Endothelial cell of umbilical vein (primary cell): ENCODE measurements at regions of chr18 and their contacts with region 1.

Region 1: GRCh38 chr18:23416298-23416697 is 36.8 kb upstream of the RIOK3 start:
- DNase-seq: no peak
- H3K4me3 ChIP-seq: no peak overlapping the region
- H3K27ac ChIP-seq: no peak overlapping the region
- H3K4me1 ChIP-seq: no peaks in the 10 kb centered on the region
- H3K27me3 ChIP-seq: no peaks in the 10 kb centered on the region
- CTCF ChIP-seq: no peak
- POLR2A ChIP-seq: no peak

Region 2: DNA sequence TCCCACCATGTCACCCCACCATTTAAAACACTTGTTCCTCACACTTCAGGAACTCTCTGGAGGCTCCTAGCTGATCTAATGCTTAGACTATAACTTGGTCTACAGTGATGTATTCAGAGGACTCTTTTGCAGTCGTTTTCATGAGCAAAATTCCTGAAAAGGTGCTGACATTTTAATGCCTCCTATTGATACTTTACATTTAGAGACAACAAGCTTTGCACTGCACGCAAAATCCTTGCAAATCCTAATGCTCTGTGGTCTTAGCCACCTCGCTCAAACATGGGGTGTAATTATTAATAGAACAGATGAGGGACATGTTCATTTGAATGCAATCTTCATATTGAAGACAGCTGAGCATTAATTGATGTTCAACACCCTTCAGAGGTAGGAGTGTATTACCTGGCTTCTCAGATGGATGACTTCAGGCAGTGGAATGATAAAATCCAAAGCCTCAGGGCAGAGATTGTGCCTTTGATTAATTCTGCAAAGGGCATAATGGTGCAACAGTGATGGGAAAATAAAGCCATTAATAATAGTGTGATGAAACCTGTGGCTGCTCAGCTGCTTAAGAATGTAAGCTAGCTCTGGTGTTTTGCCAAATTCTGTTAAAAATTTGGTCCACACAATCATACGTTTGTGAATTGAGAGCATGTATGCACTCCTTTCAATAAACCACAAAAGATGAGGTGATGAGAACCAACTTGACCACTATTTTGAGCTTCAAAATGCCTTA is 1004.0 kb before region 1 on chr18:
- CTCF ChIA-PET with region 1: no interaction called
- POLR2A ChIA-PET with region 1: no interaction called
- dilution Hi-C with region 1: no loop called
- intact Hi-C with region 1: no loop called
- DNase-seq: no peak
- H3K4me3 ChIP-seq: no peak overlapping the region
- H3K27ac ChIP-seq: no peak overlapping the region
- H3K4me1 ChIP-seq: no peaks in the 10 kb centered on the region
- H3K27me3 ChIP-seq: no peaks in the 10 kb centered on the region
- CTCF ChIP-seq: no peak
- POLR2A ChIP-seq: no peak

Region 3: DNA sequence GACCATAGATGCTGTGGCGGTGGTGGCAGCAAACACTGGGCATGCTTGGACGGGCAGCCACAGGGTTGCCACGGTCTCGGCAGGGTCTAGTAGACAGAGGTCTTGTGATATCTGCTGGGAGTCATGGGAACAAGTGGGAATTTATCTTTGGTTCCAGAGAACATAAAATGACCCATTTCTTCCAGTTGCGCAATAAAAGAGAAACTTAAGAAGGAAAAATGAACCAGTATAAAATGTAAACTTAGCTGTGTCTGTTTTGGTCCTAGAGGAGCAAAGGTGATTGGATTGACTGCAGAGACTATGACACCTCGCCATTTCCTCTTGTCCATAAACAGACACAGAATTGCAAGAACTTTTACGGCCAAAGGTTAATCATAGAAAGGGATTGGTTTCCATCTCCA is 615.7 kb before region 1 on chr18:
- CTCF ChIA-PET with region 1: interaction called, 11 read pairs
- POLR2A ChIA-PET with region 1: no interaction called
- dilution Hi-C with region 1: no loop called
- intact Hi-C with region 1: no loop called
- DNase-seq: no peak
- H3K4me3 ChIP-seq: no peak overlapping the region
- H3K27ac ChIP-seq: no peak overlapping the region
- H3K4me1 ChIP-seq: no peaks in the 10 kb centered on the region
- H3K27me3 ChIP-seq: peaks cover 33 to 48% of the 10 kb centered on the region in 2 experiments
- CTCF ChIP-seq: no peak
- POLR2A ChIP-seq: no peak

Region 4: GRCh38 chr18:23032030-23032582 is 384.2 kb before region 1 on chr18:
- CTCF ChIA-PET with region 1: interaction called, 85 read pairs
- POLR2A ChIA-PET with region 1: interaction called, 3 read pairs
- dilution Hi-C with region 1: no loop called
- intact Hi-C with region 1: loop called (anchors 1 kb)
- DNase-seq: peak; percentile 45
- H3K4me3 ChIP-seq: no peak overlapping the region
- H3K27ac ChIP-seq: peak overlapping the region; percentile 20
- H3K4me1 ChIP-seq: peaks cover 10% of the 10 kb centered on the region
- H3K27me3 ChIP-seq: no peaks in the 10 kb centered on the region
- CTCF ChIP-seq: no peak
- POLR2A ChIP-seq: no peak

Region 5: DNA sequence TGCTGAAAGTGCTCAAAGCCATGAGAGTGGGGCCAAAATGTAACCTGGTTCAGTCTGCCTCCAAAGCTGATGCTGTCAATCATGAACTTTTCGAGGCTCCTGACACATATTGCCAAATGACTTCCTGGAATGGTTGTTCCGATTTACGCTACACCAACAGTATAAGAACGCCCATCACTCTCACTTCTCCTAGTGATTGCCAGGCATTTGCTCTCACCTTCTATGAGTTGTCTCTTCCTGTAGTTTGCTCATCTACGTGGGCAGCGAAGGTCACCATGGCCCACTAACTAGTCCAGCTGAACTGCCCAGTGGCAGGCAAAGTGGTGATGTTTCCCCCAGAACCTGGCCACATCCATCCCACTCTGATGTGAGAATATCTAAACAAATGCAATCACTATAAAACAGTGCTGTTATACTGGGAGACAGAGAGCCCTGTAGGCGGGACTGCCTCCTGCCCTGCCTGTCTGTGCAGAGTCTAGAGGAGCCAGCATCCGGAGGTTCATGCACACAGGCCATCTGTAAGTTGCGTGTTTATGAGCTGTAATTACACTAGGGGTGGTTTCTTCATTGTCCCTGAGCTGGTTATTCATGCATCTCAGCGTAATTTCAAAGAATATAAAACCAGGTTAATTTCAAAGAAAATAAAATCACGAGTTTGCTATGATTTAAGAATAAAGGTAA is 289.8 kb before region 1 on chr18:
- CTCF ChIA-PET with region 1: interaction called, 92 read pairs
- POLR2A ChIA-PET with region 1: no interaction called
- dilution Hi-C with region 1: no loop called
- intact Hi-C with region 1: loop called (anchors 1 kb)
- DNase-seq: no peak
- H3K4me3 ChIP-seq: no peak overlapping the region
- H3K27ac ChIP-seq: no peak overlapping the region
- H3K4me1 ChIP-seq: peaks cover 17% of the 10 kb centered on the region
- H3K27me3 ChIP-seq: no peaks in the 10 kb centered on the region
- CTCF ChIP-seq: no peak
- POLR2A ChIP-seq: no peak

Region 6: DNA sequence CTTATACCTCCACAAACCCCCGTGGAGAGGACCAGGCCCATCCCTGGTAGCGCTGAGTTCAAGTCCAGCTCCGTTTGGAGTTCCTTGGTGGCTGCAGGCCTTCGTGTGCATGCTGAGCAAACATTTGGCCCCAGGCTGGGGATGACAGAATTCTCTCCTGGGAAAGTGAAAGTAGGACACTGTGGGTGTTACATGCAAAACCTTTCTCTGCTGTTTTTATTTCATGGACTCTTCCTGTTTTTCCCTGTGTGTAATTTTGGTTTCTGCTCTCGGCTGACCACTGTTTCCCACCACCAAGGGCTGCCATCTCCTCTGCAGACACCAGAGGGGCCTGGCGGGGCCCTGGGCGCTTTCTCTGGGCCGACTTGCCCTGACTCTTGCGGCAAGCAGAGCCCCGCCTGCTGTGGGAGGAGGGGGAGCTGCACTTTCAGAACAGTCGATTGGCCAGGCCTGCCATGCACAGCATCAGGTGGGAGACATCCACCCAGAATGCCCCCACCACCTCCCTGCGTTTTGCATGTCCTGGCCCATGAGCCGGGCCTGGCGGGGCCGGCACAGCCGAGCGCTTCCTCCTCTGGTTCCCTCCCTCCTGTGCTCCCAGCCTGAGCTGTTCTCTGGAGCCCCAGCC is 178.7 kb before region 1 on chr18:
- CTCF ChIA-PET with region 1: interaction called, 28 read pairs
- POLR2A ChIA-PET with region 1: no interaction called
- dilution Hi-C with region 1: no loop called
- intact Hi-C with region 1: loop called (anchors 1 kb)
- DNase-seq: peak; percentile 84
- H3K4me3 ChIP-seq: no peak overlapping the region
- H3K27ac ChIP-seq: peak overlapping the region; percentile 83
- H3K4me1 ChIP-seq: peaks cover 21% of the 10 kb centered on the region
- H3K27me3 ChIP-seq: no peaks in the 10 kb centered on the region
- CTCF ChIP-seq: peak; percentile 51 to 66
- POLR2A ChIP-seq: no peak

Region 7: DNA sequence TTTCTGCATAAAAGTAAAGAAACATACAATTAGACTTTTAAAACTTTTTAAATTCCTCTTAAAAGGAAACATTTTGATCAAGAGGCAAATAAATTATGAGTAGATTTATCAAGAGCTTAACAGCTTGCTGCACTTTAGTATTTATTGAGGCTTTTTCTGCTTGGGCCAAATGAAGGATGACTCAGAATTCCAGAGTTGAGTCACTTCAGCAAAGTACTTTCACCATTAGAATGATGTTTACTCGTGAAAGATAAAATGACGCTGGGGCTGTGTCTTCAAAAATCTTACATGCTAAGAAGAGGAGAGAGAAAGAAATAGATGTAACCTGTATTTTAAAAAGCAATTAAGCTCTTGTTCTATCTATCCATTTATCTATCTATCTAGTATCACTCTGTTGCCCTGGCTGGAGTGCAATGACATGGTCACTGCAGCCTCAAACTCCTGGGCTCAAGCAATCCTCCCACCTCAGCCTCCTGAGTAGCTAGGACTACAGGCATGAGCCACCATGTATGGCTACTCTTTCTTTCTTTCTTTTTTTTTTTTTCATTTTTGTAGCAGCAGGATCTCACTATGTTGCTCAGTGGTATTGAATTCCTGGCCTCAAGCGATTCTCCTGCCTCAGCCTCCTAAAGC is 38.5 kb before region 1 on chr18:
- CTCF ChIA-PET with region 1: interaction called, 63 read pairs
- POLR2A ChIA-PET with region 1: no interaction called
- dilution Hi-C with region 1: no loop called
- intact Hi-C with region 1: loop called (anchors 1 kb)
- DNase-seq: peak; percentile 90
- H3K4me3 ChIP-seq: no peak overlapping the region
- H3K27ac ChIP-seq: peak overlapping the region; percentile 78
- H3K4me1 ChIP-seq: peaks cover 36% of the 10 kb centered on the region
- H3K27me3 ChIP-seq: no peaks in the 10 kb centered on the region
- CTCF ChIP-seq: no peak
- POLR2A ChIP-seq: no peak

Region 8: GRCh38 chr18:23563377-23564043 is 147.2 kb after region 1 on chr18:
- CTCF ChIA-PET with region 1: no interaction called
- POLR2A ChIA-PET with region 1: no interaction called
- dilution Hi-C with region 1: no loop called
- intact Hi-C with region 1: no loop called
- DNase-seq: no peak
- H3K4me3 ChIP-seq: no peak overlapping the region
- H3K27ac ChIP-seq: no peak overlapping the region
- H3K4me1 ChIP-seq: no peaks in the 10 kb centered on the region
- H3K27me3 ChIP-seq: no peaks in the 10 kb centered on the region
- CTCF ChIP-seq: no peak
- POLR2A ChIP-seq: no peak